ENCODE measurements at regions of chr1 and their contacts with region 1.

Region 1: GRCh38 chr1:93154898-93155297 is 25.3 kb downstream of the TMED5 start:
- DNase-seq: no peak
- ATAC-seq: no peak
- H3K4me3 ChIP-seq: no peak overlapping the region
- H3K4me3 Mint-ChIP-seq: no peak overlapping the region
- H3K27ac ChIP-seq: no peak overlapping the region
- H3K27ac Mint-ChIP-seq: no peak overlapping the region
- H3K4me1 ChIP-seq: no peaks in the 10 kb centered on the region
- H3K4me1 Mint-ChIP-seq: no peaks in the 10 kb centered on the region
- H3K27me3 ChIP-seq: no peaks in the 10 kb centered on the region
- H3K27me3 Mint-ChIP-seq: no peaks in the 10 kb centered on the region
- CTCF ChIP-seq: no peak

Region 2: GRCh38 chr1:93114391-93114790 is 40.5 kb before region 1 on chr1:
- CTCF ChIA-PET with region 1: no interaction called
- POLR2A ChIA-PET with region 1: no interaction called
- intact Hi-C with region 1: loop called (anchors 5 kb)
- DNase-seq: no peak
- ATAC-seq: no peak
- H3K4me3 ChIP-seq: no peak overlapping the region
- H3K4me3 Mint-ChIP-seq: no peak overlapping the region
- H3K27ac ChIP-seq: no peak overlapping the region
- H3K27ac Mint-ChIP-seq: no peak overlapping the region
- H3K4me1 ChIP-seq: peaks cover 0 to 15% of the 10 kb centered on the region in 2 donors
- H3K4me1 Mint-ChIP-seq: peaks cover 22% of the 10 kb centered on the region
- H3K27me3 ChIP-seq: no peaks in the 10 kb centered on the region
- H3K27me3 Mint-ChIP-seq: no peaks in the 10 kb centered on the region
- CTCF ChIP-seq: no peak

Measured in B cell (primary cell).